GM12878 (cell line): ENCODE measurements at regions of chr5 and their contacts with region 1.

Region 1: GRCh38 chr5:132419502-132420468 is 50.3 kb downstream of the SLC22A5 start:
- DNase-seq: no peak
- ATAC-seq: peak; percentile 50
- H3K4me3 ChIP-seq: peak overlapping the region; percentile 31; the same call in 1 of the 2 replicates
- H3K27ac ChIP-seq: peak overlapping the region; percentile 94
- H3K4me1 ChIP-seq: peaks cover 79% of the 10 kb centered on the region
- H3K27me3 ChIP-seq: no peaks in the 10 kb centered on the region
- CTCF ChIP-seq: peak; percentile 74 to 81 (median 80)
- EP300 ChIP-seq: no peak
- POLR2A ChIP-seq: no peak
- RAD21 ChIP-seq: peak; percentile 78

Region 2: DNA sequence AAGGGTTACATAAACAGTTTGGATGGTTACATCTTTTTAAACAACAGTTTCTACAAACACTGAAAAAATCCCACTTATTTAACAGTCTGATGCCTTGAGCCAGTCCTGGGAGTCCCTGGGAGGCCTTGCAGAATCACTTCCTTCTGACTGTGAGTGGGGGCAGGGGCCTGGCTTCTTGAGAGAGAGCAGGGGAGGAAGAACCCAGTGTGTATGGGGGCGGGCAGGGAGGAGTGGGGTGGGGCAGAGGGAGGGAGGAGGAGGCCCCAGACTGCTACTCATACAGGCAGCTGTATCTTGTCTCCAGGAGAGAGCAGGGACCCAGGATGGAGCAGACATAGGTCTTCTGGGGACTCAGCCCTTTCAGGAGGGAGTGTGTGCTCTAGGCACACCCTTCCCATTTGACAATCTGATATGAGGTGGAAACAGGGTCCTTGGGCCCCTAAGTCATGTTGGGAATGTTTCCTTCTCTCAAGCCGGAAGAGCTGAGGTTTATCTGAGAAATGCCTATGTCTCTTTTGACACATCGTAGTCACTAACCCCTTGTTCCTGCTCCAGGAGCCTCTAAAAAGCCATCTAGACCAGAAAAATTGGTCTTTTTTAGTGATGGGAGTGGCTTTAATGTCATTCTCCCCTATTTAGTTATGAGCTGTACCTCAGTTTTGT is 17.9 kb after region 1 on chr5:
- CTCF ChIA-PET with region 1: interaction called, 47 read pairs
- POLR2A ChIA-PET with region 1: interaction called, 97 read pairs
- RAD21 ChIA-PET with region 1: interaction called, 52 read pairs
- SMC1A ChIA-PET with region 1: interaction called, 88 read pairs
- in situ Hi-C with region 1: no loop called
- intact Hi-C with region 1: no loop called
- DNase-seq: no peak
- ATAC-seq: peak; percentile 91
- H3K4me3 ChIP-seq: peak overlapping the region; percentile 18; the same call in 1 of the 2 replicates
- H3K27ac ChIP-seq: peak overlapping the region; percentile 62
- H3K4me1 ChIP-seq: peaks cover 28% of the 10 kb centered on the region
- H3K27me3 ChIP-seq: no peaks in the 10 kb centered on the region
- CTCF ChIP-seq: no peak
- EP300 ChIP-seq: no peak
- POLR2A ChIP-seq: peak; percentile 36; the same call in 1 of the 2 replicates
- RAD21 ChIP-seq: peak; percentile 19; the same call in 1 of the 2 replicates

Region 3: GRCh38 chr5:132479111-132479951 is 59.5 kb after region 1 on chr5:
- CTCF ChIA-PET with region 1: interaction called, 11 read pairs
- POLR2A ChIA-PET with region 1: interaction called, 389 read pairs
- RAD21 ChIA-PET with region 1: interaction called, 453 read pairs
- SMC1A ChIA-PET with region 1: interaction called, 300 read pairs
- in situ Hi-C with region 1: loop called (anchors 5 kb)
- intact Hi-C with region 1: no loop called
- DNase-seq: no peak
- ATAC-seq: peak; percentile 53
- H3K4me3 ChIP-seq: no peak overlapping the region
- H3K27ac ChIP-seq: peak overlapping the region; percentile 20
- H3K4me1 ChIP-seq: peaks cover 29% of the 10 kb centered on the region
- H3K27me3 ChIP-seq: no peaks in the 10 kb centered on the region
- CTCF ChIP-seq: no peak
- EP300 ChIP-seq: no peak
- POLR2A ChIP-seq: no peak; the same call in 1 of the 2 replicates
- RAD21 ChIP-seq: no peak

Region 4: DNA sequence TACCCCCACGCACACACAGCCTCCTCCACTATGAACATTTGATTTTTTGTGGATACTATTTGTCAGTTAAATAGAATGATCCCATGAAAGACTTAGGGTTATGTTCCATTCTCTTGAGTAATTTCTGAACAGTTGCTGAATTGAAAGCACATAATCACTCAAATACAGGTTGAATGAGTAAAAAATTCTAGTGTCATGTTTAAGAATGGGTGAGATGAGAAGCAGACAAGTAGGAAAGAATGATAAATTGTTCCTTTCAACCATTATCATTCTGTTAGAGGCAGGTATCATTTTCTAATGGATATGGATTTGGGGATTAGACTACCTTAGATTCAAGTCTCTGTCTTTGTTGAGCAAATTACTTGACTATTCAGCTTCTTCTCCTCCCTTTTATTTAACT is 156.3 kb after region 1 on chr5:
- CTCF ChIA-PET with region 1: no interaction called
- POLR2A ChIA-PET with region 1: no interaction called
- RAD21 ChIA-PET with region 1: no interaction called
- SMC1A ChIA-PET with region 1: no interaction called
- in situ Hi-C with region 1: no loop called
- intact Hi-C with region 1: no loop called
- DNase-seq: no peak
- ATAC-seq: no peak
- H3K4me3 ChIP-seq: no peak overlapping the region
- H3K27ac ChIP-seq: no peak overlapping the region
- H3K4me1 ChIP-seq: no peaks in the 10 kb centered on the region
- H3K27me3 ChIP-seq: no peaks in the 10 kb centered on the region
- CTCF ChIP-seq: no peak
- EP300 ChIP-seq: no peak
- POLR2A ChIP-seq: no peak
- RAD21 ChIP-seq: no peak

Region 5: DNA sequence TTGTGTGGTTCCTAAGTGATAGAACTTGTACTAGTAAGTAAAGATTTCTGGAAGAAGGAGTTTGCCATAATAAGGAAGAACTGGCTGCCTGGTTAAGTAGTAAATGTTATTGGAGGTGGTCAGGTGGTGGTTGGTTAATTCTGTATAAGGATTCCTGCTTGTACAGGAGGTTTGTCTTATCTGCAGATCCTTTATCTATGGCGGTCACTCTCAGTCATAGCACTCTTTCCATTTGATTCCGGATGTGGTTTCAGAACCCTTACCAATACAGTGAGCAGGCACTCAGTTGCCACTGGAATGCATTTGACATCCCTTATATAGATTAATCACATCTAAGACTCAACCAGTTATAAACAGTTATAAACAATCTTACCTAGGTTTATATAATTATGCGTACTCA is 187.3 kb after region 1 on chr5:
- CTCF ChIA-PET with region 1: no interaction called
- POLR2A ChIA-PET with region 1: no interaction called
- RAD21 ChIA-PET with region 1: no interaction called
- SMC1A ChIA-PET with region 1: no interaction called
- in situ Hi-C with region 1: no loop called
- intact Hi-C with region 1: no loop called
- DNase-seq: no peak
- ATAC-seq: no peak
- H3K4me3 ChIP-seq: no peak overlapping the region
- H3K27ac ChIP-seq: no peak overlapping the region
- H3K4me1 ChIP-seq: no peaks in the 10 kb centered on the region
- H3K27me3 ChIP-seq: no peaks in the 10 kb centered on the region
- CTCF ChIP-seq: no peak
- EP300 ChIP-seq: no peak
- POLR2A ChIP-seq: no peak
- RAD21 ChIP-seq: no peak